CD8-positive, alpha-beta T cell (primary cell): ENCODE measurements at regions of chr16 and their contacts with region 1.

Region 1: GRCh38 chr16:21599233-21600030 is at the start of gene METTL9:
- DNase-seq: peak; percentile 92 to 97 (median 94)
- ATAC-seq: peak; percentile 91
- H3K4me3 ChIP-seq: peak within 1 kb of the TSS; percentile 69 to 96
- H3K4me3 Mint-ChIP-seq: peak within 1 kb of the TSS; percentile 87
- H3K27ac ChIP-seq: peak within 1 kb of the TSS; percentile 84 to 91
- H3K27ac Mint-ChIP-seq: peak within 1 kb of the TSS; percentile 96
- H3K4me1 ChIP-seq: peaks cover 47% of the 10 kb centered on the region
- H3K4me1 Mint-ChIP-seq: peaks cover 62% of the 10 kb centered on the region
- H3K27me3 ChIP-seq: no peaks in the 10 kb centered on the region
- H3K27me3 Mint-ChIP-seq: no peaks in the 10 kb centered on the region
- CTCF ChIP-seq: no peak
- total RNA-seq, gene METTL9: 93.8 to 99.0 TPM

Region 2: GRCh38 chr16:21523411-21524067 is 75.9 kb before region 1 on chr16:
- CTCF ChIA-PET with region 1: no interaction called
- POLR2A ChIA-PET with region 1: no interaction called
- intact Hi-C with region 1: loop called in 1 of 2 experiments (anchors 10 kb)
- DNase-seq: no peak
- ATAC-seq: no peak
- H3K4me3 ChIP-seq: no peak overlapping the region
- H3K4me3 Mint-ChIP-seq: no peak overlapping the region
- H3K27ac ChIP-seq: no peak overlapping the region
- H3K27ac Mint-ChIP-seq: no peak overlapping the region
- H3K4me1 ChIP-seq: no peaks in the 10 kb centered on the region
- H3K4me1 Mint-ChIP-seq: peaks cover 8% of the 10 kb centered on the region
- H3K27me3 ChIP-seq: no peaks in the 10 kb centered on the region
- H3K27me3 Mint-ChIP-seq: no peaks in the 10 kb centered on the region
- CTCF ChIP-seq: no peak

Region 3: DNA sequence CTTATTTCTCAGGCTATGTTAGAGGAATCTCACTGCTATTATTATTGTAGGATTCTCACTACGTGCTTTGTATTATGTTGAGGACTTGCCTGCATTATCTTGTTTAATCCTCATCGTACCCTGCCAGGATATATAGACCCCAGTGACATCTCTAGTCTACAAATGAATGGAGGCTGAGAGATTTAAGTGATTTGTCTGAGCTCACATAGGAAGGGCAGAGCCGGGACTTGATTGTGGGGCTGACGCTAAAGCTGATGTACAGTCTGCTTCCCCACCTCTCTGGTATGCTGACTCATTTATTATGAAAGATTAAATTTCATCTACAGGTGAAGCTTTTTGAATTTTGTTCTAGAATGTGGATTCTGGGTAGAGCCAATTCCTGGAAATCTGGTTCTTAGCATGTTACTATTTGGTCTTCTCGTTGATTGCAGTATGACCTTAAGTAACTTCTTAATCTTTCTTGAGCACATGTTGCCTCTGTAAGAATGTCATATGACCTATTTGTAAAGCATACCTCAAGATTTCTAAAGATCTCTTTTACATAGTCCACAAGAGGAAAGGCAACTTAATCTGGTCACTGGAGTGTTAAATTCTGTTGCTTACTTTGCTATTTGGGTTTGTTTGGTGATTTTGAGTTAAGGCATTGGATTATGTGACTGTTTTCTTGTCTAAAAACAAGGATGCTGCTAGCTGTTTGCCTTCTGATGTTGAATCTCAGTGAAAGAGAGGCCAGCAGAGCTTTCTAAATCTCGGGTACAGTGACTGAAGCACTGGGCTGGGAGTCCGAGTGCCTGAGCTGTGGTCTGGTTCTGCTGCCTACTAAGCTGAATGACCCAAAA is 12.3 kb after region 1 on chr16:
- CTCF ChIA-PET with region 1: interaction called, 3 read pairs
- POLR2A ChIA-PET with region 1: interaction called, 3 read pairs
- intact Hi-C with region 1: loop called in 1 of 2 experiments (anchors 1 kb)
- DNase-seq: peak in 1 of 9 experiments; percentile 35
- ATAC-seq: peak; percentile 71
- H3K4me3 ChIP-seq: no peak overlapping the region
- H3K4me3 Mint-ChIP-seq: peak overlapping the region; percentile 19
- H3K27ac ChIP-seq: no peak overlapping the region
- H3K27ac Mint-ChIP-seq: peak overlapping the region; percentile 3
- H3K4me1 ChIP-seq: peaks cover 70% of the 10 kb centered on the region
- H3K4me1 Mint-ChIP-seq: peaks cover 82% of the 10 kb centered on the region
- H3K27me3 ChIP-seq: no peaks in the 10 kb centered on the region
- H3K27me3 Mint-ChIP-seq: no peaks in the 10 kb centered on the region
- CTCF ChIP-seq: no peak

Region 4: GRCh38 chr16:21646721-21647561 is 47.5 kb after region 1 on chr16:
- CTCF ChIA-PET with region 1: interaction called, 5 read pairs
- POLR2A ChIA-PET with region 1: interaction called, 18 read pairs
- intact Hi-C with region 1: loop called in 1 of 2 experiments (anchors 1 kb)
- DNase-seq: peak; percentile 42 to 90 (median 71)
- ATAC-seq: peak; percentile 78
- H3K4me3 ChIP-seq: peak overlapping the region in 1 of 2 experiments; percentile 9
- H3K4me3 Mint-ChIP-seq: peak overlapping the region; percentile 74
- H3K27ac ChIP-seq: peak overlapping the region; percentile 58 to 85
- H3K27ac Mint-ChIP-seq: peak overlapping the region; percentile 95
- H3K4me1 ChIP-seq: peaks cover 51% of the 10 kb centered on the region
- H3K4me1 Mint-ChIP-seq: peaks cover 55% of the 10 kb centered on the region
- H3K27me3 ChIP-seq: no peaks in the 10 kb centered on the region
- H3K27me3 Mint-ChIP-seq: no peaks in the 10 kb centered on the region
- CTCF ChIP-seq: no peak

Region 5: DNA sequence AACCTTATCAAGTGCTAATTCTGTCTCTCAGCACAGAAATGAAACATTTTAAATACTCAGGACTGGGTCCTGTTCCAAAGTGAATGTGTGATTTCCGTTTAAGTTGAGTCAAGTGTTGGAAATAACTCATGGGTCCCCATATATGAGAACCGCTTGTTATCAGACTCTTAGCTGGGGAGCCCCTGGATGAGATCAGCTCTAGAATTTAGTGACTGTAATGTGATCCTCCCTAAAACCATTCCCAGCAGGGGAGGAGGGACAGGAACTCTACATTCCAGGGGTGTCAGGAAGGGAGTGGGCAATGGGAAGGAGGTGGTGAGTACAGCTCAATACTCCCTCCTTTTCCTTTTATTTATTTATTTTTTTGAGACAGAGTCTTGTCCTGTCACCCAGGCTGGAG is 101.8 kb after region 1 on chr16:
- CTCF ChIA-PET with region 1: no interaction called
- POLR2A ChIA-PET with region 1: no interaction called
- intact Hi-C with region 1: no loop called
- DNase-seq: no peak
- ATAC-seq: no peak
- H3K4me3 ChIP-seq: no peak overlapping the region
- H3K4me3 Mint-ChIP-seq: no peak overlapping the region
- H3K27ac ChIP-seq: no peak overlapping the region
- H3K27ac Mint-ChIP-seq: no peak overlapping the region
- H3K4me1 ChIP-seq: no peaks in the 10 kb centered on the region
- H3K4me1 Mint-ChIP-seq: no peaks in the 10 kb centered on the region
- H3K27me3 ChIP-seq: no peaks in the 10 kb centered on the region
- H3K27me3 Mint-ChIP-seq: no peaks in the 10 kb centered on the region
- CTCF ChIP-seq: no peak

Region 6: GRCh38 chr16:22007509-22008214 is 408.2 kb after region 1 on chr16 and contains the start of gene MOSMO:
- CTCF ChIA-PET with region 1: no interaction called
- POLR2A ChIA-PET with region 1: no interaction called
- intact Hi-C with region 1: loop called (anchors 2 to 5 kb)
- DNase-seq: peak; percentile 30 to 81 (median 67)
- ATAC-seq: peak; percentile 84
- H3K4me3 ChIP-seq: peak within 1 kb of the TSS; percentile 93 to 95
- H3K4me3 Mint-ChIP-seq: peak within 1 kb of the TSS; percentile 88
- H3K27ac ChIP-seq: peak within 1 kb of the TSS; percentile 70 to 75
- H3K27ac Mint-ChIP-seq: peak within 1 kb of the TSS; percentile 88
- H3K4me1 ChIP-seq: peaks cover 24% of the 10 kb centered on the region
- H3K4me1 Mint-ChIP-seq: peaks cover 46% of the 10 kb centered on the region
- H3K27me3 ChIP-seq: no peaks in the 10 kb centered on the region
- H3K27me3 Mint-ChIP-seq: no peaks in the 10 kb centered on the region
- CTCF ChIP-seq: no peak
- total RNA-seq, gene MOSMO: 2.4 TPM

Region 7: DNA sequence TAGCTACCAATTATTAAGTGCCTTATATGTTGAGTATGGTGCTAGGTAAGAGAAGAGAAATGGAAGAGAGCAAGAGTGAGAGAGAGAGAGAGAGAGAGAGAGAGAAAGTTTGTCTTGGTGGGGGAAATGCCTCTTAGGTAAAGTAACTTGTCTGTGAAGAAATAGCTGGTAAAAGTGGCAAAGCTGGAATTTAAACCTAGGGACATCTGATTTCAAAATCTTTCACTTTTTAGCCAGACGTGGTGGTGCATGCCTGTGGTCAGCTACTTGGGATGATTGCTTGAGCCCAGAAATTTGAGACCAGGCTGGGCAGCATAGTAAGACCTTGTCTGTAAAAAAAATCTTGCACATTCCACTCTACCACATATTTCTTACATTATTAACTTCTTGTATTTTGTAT is 798.0 kb after region 1 on chr16:
- CTCF ChIA-PET with region 1: no interaction called
- POLR2A ChIA-PET with region 1: no interaction called
- intact Hi-C with region 1: no loop called
- DNase-seq: no peak
- ATAC-seq: no peak
- H3K4me3 ChIP-seq: no peak overlapping the region
- H3K4me3 Mint-ChIP-seq: no peak overlapping the region
- H3K27ac ChIP-seq: no peak overlapping the region
- H3K27ac Mint-ChIP-seq: no peak overlapping the region
- H3K4me1 ChIP-seq: no peaks in the 10 kb centered on the region
- H3K4me1 Mint-ChIP-seq: no peaks in the 10 kb centered on the region
- H3K27me3 ChIP-seq: no peaks in the 10 kb centered on the region
- H3K27me3 Mint-ChIP-seq: no peaks in the 10 kb centered on the region
- CTCF ChIP-seq: no peak